Left colon (tissue), 2 donors: ENCODE measurements at regions of chr2 and their contacts with region 1.

Region 1: DNA sequence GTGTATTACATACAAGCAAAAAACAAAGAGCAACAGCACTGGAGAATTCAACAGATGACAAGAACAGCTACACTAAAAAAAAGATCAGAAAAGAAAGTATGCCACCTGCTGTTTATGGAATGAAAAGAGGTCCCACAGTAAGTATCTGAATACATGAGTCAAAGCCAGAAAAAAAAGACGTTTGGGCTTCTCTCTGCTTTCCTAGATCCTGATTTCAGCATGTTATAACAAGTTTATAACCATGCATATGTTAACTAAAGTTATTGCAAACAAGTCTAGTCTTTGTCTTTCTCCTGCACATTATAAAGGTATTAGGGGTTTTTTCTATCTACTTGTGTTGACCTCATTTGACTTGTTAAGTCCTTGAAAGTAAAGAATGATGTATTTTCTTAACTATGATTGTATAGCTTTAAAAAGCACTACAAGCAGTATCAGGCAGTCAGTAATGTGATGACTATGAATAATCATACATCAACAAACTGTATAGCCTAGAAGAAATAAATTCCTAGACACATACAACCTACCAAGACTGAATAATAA is 108.5 kb upstream of the COL5A2 start:
- DNase-seq: no peak
- ATAC-seq: peak; percentile 58

Region 2: GRCh38 chr2:189412330-189412953 is 124.4 kb after region 1 on chr2:
- intact Hi-C with region 1: loop called in 1 of 2 experiments (anchors 10 kb)
- DNase-seq: no peak
- ATAC-seq: peak; percentile 41